ENCODE measurements at regions of chr6 and their contacts with region 1.

Region 1: GRCh38 chr6:106085984-106086813 is at the start of gene PRDM1:
- DNase-seq: peak; percentile 93
- H3K4me3 Mint-ChIP-seq: peak within 1 kb of the TSS; percentile 97
- H3K27ac Mint-ChIP-seq: peak within 1 kb of the TSS; percentile 89
- H3K4me1 Mint-ChIP-seq: peaks cover 58% of the 10 kb centered on the region
- H3K27me3 Mint-ChIP-seq: no peaks in the 10 kb centered on the region
- CTCF ChIP-seq: no peak
- total RNA-seq, gene PRDM1: 12.6 and 13.1 TPM in 2 replicates

Region 2: DNA sequence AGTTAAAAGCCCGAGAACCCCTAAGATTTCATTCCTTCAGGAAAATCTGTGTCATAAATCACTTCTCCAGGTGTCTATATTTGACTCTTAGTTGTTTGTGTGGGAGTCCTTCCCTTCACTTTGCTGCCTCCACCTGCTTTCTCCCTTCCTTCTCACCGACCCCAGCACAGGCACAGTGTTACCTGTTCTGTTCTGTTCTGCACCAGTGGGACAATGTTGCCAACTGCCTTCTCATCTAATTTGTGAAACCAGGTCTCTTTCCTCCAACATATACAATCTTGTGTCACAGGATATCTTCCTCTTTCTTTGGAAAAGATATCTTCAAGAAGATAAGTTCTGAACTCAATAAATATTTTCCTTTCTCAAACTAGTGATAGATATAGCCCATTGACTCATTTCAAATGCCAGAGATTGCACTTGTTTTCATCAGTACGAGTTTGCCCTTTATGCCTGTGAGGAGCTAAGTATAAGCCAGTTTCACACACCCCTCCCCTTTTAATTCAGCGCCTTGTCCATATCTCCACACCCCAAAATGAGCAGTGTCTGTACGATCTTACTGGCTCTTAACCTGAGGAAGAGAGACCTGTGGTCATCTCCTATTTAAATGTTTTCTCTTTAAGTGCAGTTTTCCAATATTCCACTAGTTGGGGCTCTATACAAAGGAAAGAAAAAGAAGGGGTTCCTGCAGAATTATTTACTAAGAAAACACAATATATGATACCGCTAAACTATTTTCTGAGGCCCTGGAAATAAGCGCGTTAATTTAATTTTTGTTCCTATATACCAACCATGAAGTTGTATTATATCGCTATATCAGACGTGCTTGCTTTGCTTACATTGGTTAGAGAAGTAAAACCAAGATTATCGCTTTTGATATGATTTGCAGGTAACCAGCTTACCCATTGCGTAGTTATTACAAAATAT is 601.7 kb before region 1 on chr6:
- CTCF ChIA-PET with region 1: interaction called, 10 read pairs
- POLR2A ChIA-PET with region 1: interaction called, 9 read pairs
- intact Hi-C with region 1: loop called (anchors 1 kb)
- DNase-seq: peak; percentile 71
- H3K4me3 Mint-ChIP-seq: peak overlapping the region; percentile 3
- H3K27ac Mint-ChIP-seq: peak overlapping the region; percentile 83
- H3K4me1 Mint-ChIP-seq: peaks cover 36% of the 10 kb centered on the region
- H3K27me3 Mint-ChIP-seq: no peaks in the 10 kb centered on the region
- CTCF ChIP-seq: peak; percentile 80

Region 3: GRCh38 chr6:105793130-105793529 is 293.1 kb before region 1 on chr6:
- CTCF ChIA-PET with region 1: no interaction called
- POLR2A ChIA-PET with region 1: interaction called, 11 read pairs
- intact Hi-C with region 1: loop called (anchors 1 kb)
- DNase-seq: peak; percentile 62
- H3K4me3 Mint-ChIP-seq: no peak overlapping the region
- H3K27ac Mint-ChIP-seq: no peak overlapping the region
- H3K4me1 Mint-ChIP-seq: peaks cover 17% of the 10 kb centered on the region
- H3K27me3 Mint-ChIP-seq: no peaks in the 10 kb centered on the region
- CTCF ChIP-seq: peak; percentile 13

Region 4: DNA sequence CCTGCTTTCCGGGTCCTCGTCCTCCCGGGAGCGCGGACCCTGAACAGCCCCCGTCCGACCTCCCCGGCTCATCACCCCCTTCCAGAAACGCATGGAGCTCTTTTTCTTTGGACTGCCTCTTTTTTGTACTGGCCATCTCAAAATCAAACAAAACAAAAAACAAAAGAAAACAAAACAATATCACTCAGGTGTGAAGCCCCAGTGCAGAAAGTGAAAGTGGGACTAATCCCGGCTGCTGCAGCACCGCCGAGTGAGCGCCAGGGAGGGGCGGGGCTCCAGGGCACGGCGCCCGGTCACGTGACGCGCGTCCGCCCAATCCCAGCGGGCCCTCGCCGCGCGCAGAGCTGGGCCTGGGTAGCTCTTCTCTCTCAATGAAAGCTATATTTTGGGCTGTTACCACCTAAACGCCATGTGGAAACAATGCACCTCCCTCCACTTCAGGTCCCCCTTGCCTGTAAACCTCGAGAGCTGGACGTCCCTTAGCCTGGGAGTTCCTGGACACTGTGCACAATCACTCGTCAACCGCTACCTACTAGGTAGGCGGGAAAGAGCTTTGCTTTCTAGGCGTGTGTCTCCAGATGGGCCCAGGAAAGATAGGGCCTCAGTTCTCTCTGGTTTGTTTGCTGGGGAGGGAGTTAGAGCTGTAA is 93.8 kb before region 1 on chr6:
- CTCF ChIA-PET with region 1: interaction called, 9 read pairs
- POLR2A ChIA-PET with region 1: interaction called, 41 read pairs
- intact Hi-C with region 1: loop called (anchors 5 kb)
- DNase-seq: peak; percentile 79
- H3K4me3 Mint-ChIP-seq: peak overlapping the region; percentile 85
- H3K27ac Mint-ChIP-seq: no peak overlapping the region
- H3K4me1 Mint-ChIP-seq: peaks cover 34% of the 10 kb centered on the region
- H3K27me3 Mint-ChIP-seq: no peaks in the 10 kb centered on the region
- CTCF ChIP-seq: no peak

Region 5: GRCh38 chr6:106223300-106223930 is 137.2 kb after region 1 on chr6:
- CTCF ChIA-PET with region 1: interaction called, 13 read pairs
- POLR2A ChIA-PET with region 1: interaction called, 19 read pairs
- intact Hi-C with region 1: loop called (anchors 1 kb)
- DNase-seq: peak; percentile 78
- H3K4me3 Mint-ChIP-seq: no peak overlapping the region
- H3K27ac Mint-ChIP-seq: no peak overlapping the region
- H3K4me1 Mint-ChIP-seq: peaks cover 4% of the 10 kb centered on the region
- H3K27me3 Mint-ChIP-seq: no peaks in the 10 kb centered on the region
- CTCF ChIP-seq: peak; percentile 62

Region 6: DNA sequence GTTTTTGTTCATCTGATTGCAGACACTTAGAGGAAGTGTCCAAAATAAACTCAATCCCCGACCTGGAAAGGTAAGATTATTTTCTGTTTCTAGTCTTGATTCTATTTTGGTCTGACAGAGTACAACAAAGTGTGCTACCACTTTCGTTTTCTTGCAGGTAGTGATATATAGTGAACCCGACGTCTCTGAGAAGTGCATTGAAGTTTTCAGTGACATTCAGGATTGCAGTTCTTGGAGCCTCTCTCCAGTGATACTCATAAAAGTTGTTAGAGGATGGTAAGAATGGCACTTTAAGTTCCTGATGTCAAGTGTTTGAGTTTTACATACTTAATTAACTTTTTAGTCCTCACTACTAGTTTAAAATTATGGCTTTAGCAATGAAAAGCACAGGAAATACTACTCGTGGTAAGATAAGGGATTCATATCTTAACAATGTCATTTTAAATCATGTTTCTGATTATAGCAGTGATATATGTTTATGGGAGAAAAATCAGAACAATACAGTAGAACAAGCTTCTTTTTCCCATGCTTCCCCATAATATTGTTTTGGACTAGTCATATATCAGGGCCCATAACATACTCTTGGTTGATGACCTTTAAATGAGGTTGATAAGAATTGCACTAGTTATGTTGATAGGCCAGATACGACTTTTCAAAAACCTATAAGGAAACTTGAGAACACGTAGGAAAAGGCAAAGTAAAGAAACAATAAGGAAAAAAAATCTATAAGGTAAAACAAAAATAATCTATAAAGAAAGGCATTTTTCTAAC is 439.1 kb after region 1 on chr6:
- CTCF ChIA-PET with region 1: no interaction called
- POLR2A ChIA-PET with region 1: no interaction called
- intact Hi-C with region 1: no loop called
- DNase-seq: peak; percentile 49
- H3K4me3 Mint-ChIP-seq: peak overlapping the region; percentile 69
- H3K27ac Mint-ChIP-seq: peak overlapping the region; percentile 96
- H3K4me1 Mint-ChIP-seq: peaks cover 43% of the 10 kb centered on the region
- H3K27me3 Mint-ChIP-seq: no peaks in the 10 kb centered on the region
- CTCF ChIP-seq: no peak